ENCODE measurements at regions of chr12 and their contacts with region 1.

Region 1: DNA sequence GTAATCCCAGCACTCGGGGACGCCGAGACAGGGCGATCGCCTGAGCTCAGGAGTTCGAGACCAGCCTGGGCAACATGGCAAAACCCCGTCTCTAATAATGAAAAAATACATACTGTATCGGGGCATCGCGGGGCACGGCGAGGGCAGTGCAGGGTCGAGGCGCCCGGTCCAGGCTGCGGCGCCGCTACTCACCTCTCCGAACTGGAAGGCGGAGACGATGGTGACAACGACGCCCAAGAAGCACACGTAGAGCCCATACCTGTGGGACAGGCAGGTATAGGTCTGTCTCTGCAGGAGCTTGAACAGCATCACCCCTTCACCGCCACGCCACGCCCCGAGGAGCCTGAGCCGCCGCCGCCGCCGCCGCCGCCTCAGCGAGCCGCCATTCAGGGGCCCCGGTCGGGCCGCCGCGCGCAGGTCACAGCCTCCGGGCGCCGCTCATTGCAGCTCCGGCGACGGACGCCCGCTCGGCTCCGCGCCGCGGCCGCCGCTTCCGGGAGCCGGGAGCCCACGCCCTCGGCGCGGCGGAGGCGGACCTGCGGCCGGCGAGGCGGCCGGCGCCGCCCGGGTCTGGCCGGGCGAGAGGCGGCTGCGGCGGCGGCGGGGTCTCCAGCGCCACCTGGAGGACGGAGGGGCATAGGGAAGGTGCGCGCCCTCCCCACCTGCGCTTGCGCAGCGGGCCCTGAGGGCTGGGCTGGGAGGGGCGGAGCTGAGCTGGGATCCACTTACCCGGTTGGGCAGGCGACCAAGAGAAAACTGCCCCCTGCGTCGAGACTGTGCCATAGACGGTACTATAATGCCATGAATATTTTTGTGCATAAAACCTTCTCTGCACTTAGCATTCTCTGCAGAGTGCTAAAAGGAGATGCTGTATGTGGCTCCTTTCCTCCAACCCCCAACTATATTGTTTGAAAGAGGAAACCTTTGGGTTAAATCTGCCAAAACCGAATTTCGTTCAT is at the start of gene GNPTAB:
- DNase-seq: peak; percentile 96
- H3K4me3 Mint-ChIP-seq: peak within 1 kb of the TSS; percentile 96
- H3K27ac Mint-ChIP-seq: peak within 1 kb of the TSS; percentile 83
- H3K4me1 Mint-ChIP-seq: peaks cover 44% of the 10 kb centered on the region
- H3K27me3 Mint-ChIP-seq: no peaks in the 10 kb centered on the region
- total RNA-seq, gene GNPTAB: 55.0 to 57.5 TPM

Region 2: DNA sequence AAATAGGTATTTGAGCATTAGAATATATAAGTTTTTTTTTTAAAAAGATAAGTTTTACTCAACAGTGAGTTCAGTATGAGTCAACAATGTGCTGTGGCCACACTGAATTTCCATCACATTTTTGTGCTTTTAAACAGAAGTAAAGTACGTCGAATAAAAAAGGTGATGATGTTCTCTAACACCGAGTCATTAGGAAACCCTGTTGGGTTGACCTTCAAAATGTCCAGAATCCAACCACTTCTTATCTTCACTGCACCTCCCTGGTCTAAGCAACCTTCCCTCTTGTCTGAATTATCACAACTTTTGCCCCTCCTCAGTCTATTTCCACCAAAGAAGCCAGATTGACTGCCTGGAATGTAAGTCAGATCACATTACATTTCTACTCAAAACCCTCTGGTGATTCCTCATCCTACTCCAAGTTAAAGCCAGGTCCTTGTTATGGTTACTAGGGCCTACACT is 48.3 kb before region 1 on chr12:
- CTCF ChIA-PET with region 1: interaction called, 42 read pairs
- POLR2A ChIA-PET with region 1: interaction called, 16 read pairs
- DNase-seq: no peak
- H3K4me3 Mint-ChIP-seq: no peak overlapping the region
- H3K27ac Mint-ChIP-seq: peak overlapping the region; percentile 0
- H3K4me1 Mint-ChIP-seq: peaks cover 49% of the 10 kb centered on the region
- H3K27me3 Mint-ChIP-seq: no peaks in the 10 kb centered on the region

Region 3: DNA sequence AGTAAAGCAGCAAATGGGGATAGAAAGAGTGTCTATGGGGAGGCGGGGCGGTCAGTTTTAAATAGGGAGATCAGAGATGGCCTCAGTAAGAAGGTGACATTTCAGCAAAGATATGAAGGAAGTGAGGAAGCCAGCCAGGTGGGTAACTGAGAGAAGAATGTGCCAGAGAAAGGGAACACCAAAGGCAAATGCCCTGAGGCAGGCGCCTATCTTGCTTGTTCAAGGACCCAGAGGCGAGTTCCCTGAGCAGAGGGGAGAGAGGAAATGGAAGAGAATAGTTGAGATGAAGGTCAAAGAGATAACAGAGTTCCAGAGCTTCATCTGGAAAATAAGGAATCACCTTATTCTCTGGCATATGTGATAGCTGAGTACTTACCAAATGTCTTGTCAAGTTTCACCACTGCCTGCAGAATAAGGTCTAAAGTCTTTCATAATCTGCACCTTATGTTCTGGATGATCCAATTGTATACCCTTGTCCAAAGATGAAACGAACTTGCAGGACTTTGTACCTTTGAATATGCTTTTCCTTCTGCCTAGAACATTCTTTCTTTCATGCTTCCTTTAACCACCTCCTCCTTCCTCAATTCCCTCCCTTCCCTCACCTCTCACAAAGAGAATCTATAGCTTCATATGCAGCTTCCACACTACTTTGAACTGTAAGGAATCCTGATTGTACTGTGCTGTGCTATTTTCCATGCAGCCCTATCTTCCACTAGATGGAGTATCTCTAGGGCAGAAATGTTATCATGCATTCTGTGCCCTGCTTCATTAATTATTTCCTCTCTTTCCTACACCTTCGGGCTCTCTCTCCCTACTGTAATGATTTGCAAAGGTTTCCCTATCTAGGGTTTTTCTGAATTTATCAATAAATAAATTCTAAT is 38.4 kb before region 1 on chr12:
- CTCF ChIA-PET with region 1: interaction called, 114 read pairs
- POLR2A ChIA-PET with region 1: interaction called, 148 read pairs
- DNase-seq: no peak
- H3K4me3 Mint-ChIP-seq: no peak overlapping the region
- H3K27ac Mint-ChIP-seq: peak overlapping the region; percentile 24
- H3K4me1 Mint-ChIP-seq: peaks cover 57% of the 10 kb centered on the region
- H3K27me3 Mint-ChIP-seq: no peaks in the 10 kb centered on the region